ENCODE measurements at regions of chr11 and their contacts with region 1.

Region 1: DNA sequence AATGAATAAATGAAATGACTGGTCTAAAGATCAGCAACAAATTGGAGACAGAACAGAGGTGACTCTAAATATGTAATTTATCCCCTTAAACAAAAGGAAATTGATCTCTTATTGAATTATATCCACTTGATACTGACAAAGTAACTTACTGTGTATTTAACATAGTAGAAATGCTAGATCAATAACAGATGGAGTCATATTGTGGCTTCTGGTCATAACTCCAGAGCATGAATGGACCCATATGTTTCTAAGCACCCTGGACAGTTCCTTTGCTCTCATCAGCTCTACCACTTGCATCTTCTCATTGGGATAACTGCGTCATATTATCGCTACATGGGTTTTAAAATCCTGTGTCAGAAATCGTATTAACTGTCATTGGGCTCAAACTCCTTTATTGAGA is 222.3 kb downstream of the ETS1 start:
- DNase-seq: peak in 1 of 5 donors; percentile 35
- H3K4me3 ChIP-seq: no peak overlapping the region
- H3K4me3 Mint-ChIP-seq: no peak overlapping the region
- H3K27ac ChIP-seq: no peak overlapping the region
- H3K27ac Mint-ChIP-seq: peak overlapping the region in 1 of 7 donors; percentile 12
- H3K4me1 ChIP-seq: peaks cover 19% of the 10 kb centered on the region
- H3K4me1 Mint-ChIP-seq: peaks cover 21 to 45% (median 29%) of the 10 kb centered on the region in 4 donors
- H3K27me3 ChIP-seq: no peaks in the 10 kb centered on the region
- H3K27me3 Mint-ChIP-seq: no peaks in the 10 kb centered on the region

Region 2: GRCh38 chr11:128133501-128133900 is 231.5 kb before region 1 on chr11:
- CTCF ChIA-PET with region 1: no interaction called
- POLR2A ChIA-PET with region 1: no interaction called
- intact Hi-C with region 1: no loop called
- DNase-seq: no peak
- H3K4me3 ChIP-seq: no peak overlapping the region
- H3K4me3 Mint-ChIP-seq: no peak overlapping the region
- H3K27ac ChIP-seq: no peak overlapping the region
- H3K27ac Mint-ChIP-seq: no peak overlapping the region
- H3K4me1 ChIP-seq: no peaks in the 10 kb centered on the region
- H3K4me1 Mint-ChIP-seq: peaks cover 0 to 13% (median 4%) of the 10 kb centered on the region in 4 donors
- H3K27me3 ChIP-seq: no peaks in the 10 kb centered on the region
- H3K27me3 Mint-ChIP-seq: no peaks in the 10 kb centered on the region

Region 3: DNA sequence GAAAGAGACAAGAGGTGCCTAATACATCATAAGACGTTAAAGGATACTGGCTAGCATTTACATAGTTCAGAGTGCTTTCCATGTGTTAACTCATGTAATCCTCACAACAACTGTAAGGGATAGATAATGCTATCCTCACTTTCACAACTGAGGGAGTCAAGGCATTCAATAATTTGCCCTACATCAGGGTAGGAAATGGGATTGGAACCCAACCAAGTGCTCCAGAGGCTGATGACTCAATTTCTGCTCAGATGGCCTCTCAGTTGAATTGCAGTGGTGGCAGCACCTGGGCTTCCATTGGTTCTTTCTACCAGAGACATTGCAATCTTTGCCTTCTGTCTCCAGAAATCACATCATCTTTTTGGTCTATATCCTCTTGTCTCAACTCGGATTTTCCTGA is 10.6 kb before region 1 on chr11:
- CTCF ChIA-PET with region 1: interaction called, 3 read pairs
- POLR2A ChIA-PET with region 1: interaction called, 19 read pairs
- intact Hi-C with region 1: loop called (anchors 2 kb)
- DNase-seq: no peak
- H3K4me3 ChIP-seq: no peak overlapping the region
- H3K4me3 Mint-ChIP-seq: no peak overlapping the region
- H3K27ac ChIP-seq: no peak overlapping the region
- H3K27ac Mint-ChIP-seq: peak overlapping the region in 1 of 7 donors; percentile 4
- H3K4me1 ChIP-seq: peaks cover 17% of the 10 kb centered on the region
- H3K4me1 Mint-ChIP-seq: peaks cover 28 to 39% (median 36%) of the 10 kb centered on the region in 4 donors
- H3K27me3 ChIP-seq: no peaks in the 10 kb centered on the region
- H3K27me3 Mint-ChIP-seq: no peaks in the 10 kb centered on the region

Region 4: DNA sequence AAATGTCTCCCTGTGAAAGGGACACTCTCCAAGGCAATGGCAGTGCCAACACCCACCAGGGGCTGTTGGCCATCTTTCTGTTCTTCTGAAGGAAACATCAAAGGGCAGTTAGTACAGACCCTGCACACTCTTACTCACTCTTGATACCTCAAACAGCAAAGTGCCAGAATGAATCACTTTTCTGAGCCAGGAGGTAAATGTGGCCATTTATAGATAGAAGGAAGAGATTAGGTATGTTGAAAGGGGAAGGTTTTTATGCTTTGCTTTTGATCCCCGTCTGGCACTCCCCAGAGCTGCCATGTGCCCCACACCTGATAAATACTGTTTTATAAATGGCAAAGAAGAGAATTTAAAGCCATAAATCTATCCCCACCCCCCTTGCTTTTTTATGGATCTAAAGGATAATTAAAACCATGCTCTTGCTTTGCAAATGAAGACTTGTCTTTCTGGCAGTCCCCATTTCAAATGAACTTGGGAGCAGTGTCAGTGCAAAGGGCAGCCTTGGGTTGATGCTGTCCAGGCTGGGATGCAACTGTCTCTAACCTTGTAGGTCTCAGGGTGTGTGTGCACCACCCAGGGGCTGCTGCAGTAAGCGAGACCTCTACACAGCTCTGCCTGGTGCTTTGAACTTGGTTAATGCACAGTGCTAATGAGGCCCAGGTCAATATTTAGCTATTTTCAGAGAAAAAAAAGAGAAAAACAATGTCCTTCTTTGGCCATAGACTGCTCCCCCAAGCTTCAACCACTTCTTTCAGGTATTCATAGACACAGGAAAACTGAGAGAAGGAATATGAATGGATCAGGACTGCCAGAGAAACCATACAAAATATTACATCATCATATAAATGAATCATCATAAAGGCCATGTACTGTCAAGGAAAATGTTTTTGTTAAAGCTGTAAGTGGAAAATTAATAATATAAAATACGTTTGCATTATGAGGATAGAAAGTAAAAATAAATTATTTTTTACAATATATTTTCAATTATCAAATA is 14.8 kb after region 1 on chr11:
- CTCF ChIA-PET with region 1: interaction called, 5 read pairs
- POLR2A ChIA-PET with region 1: interaction called, 3 read pairs
- intact Hi-C with region 1: loop called (anchors 1 kb)
- DNase-seq: peak; percentile 34 to 70 (median 37)
- H3K4me3 ChIP-seq: no peak overlapping the region
- H3K4me3 Mint-ChIP-seq: peak overlapping the region in 5 of 8 donors; percentile 12 to 67 (median 42)
- H3K27ac ChIP-seq: no peak overlapping the region
- H3K27ac Mint-ChIP-seq: peak overlapping the region; percentile 65 to 90 (median 88)
- H3K4me1 ChIP-seq: peaks cover 32% of the 10 kb centered on the region
- H3K4me1 Mint-ChIP-seq: peaks cover 31 to 50% (median 35%) of the 10 kb centered on the region in 4 donors
- H3K27me3 ChIP-seq: no peaks in the 10 kb centered on the region
- H3K27me3 Mint-ChIP-seq: no peaks in the 10 kb centered on the region